PC-3 (cell line): ENCODE measurements at regions of chr11 and their contacts with region 1.

Region 1: GRCh38 chr11:128653801-128654231 is 40.1 kb upstream of the FLI1 start:
- DNase-seq: peak; percentile 90
- ATAC-seq: peak; percentile 99
- H3K4me3 ChIP-seq: no peak overlapping the region
- H3K27ac ChIP-seq: peak overlapping the region; percentile 79
- H3K4me1 ChIP-seq: peaks cover 17% of the 10 kb centered on the region
- H3K27me3 ChIP-seq: no peaks in the 10 kb centered on the region
- CTCF ChIP-seq: peak; percentile 42; the same call in 1 of the 2 replicates

Region 2: GRCh38 chr11:128692753-128693415 is 39.1 kb after region 1 on chr11:
- CTCF ChIA-PET with region 1: no interaction called
- POLR2A ChIA-PET with region 1: no interaction called
- intact Hi-C with region 1: loop called (anchors 1 kb)
- DNase-seq: peak; percentile 42
- ATAC-seq: peak; percentile 45
- H3K4me3 ChIP-seq: peak overlapping the region; percentile 79
- H3K27ac ChIP-seq: peak overlapping the region; percentile 55
- H3K4me1 ChIP-seq: 0 out of 2 replicates have a peak, but pooled peaks cover 4% of the 10 kb centered on the region
- H3K27me3 ChIP-seq: peaks cover 43% of the 10 kb centered on the region
- CTCF ChIP-seq: no peak

Region 3: GRCh38 chr11:128711136-128711535 is 57.3 kb after region 1 on chr11:
- CTCF ChIA-PET with region 1: no interaction called
- POLR2A ChIA-PET with region 1: no interaction called
- intact Hi-C with region 1: loop called (anchors 1 kb)
- DNase-seq: peak; percentile 88
- ATAC-seq: peak; percentile 46
- H3K4me3 ChIP-seq: no peak overlapping the region
- H3K27ac ChIP-seq: peak overlapping the region; percentile 80
- H3K4me1 ChIP-seq: peaks cover 53% of the 10 kb centered on the region
- H3K27me3 ChIP-seq: no peaks in the 10 kb centered on the region
- CTCF ChIP-seq: no peak

Region 4: DNA sequence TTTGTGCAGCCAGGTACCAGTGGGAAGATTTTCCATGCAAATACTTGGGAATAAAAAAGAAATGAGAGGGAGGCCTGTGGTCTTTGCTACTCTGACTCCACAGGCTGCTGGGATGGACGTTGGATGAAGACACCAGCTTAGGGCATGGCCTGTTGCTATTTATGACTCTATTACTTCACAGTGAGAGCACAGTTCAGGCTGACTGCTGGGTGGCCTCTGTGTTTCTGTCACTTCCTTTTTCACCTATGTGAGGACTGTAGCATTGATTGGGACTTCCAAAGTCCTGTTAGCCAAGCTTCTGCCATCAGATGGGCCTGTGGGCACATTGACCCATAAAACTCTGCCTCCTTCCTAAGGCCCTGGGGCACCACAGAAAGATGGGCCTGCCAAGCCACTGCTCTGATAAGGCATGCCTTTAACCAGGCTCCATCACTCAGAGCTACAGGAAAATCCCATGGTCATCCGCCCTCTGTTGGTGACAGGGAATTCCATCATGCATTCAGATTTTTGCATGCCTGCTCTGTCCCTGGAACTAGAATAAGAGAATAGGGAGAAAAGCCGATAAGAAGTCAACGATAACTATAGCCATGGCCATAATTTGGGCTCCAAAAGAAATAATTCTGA is 148.7 kb after region 1 on chr11:
- CTCF ChIA-PET with region 1: interaction called, 4 read pairs
- POLR2A ChIA-PET with region 1: no interaction called
- intact Hi-C with region 1: loop called (anchors 1 kb)
- DNase-seq: peak; percentile 72
- ATAC-seq: peak; percentile 92
- H3K4me3 ChIP-seq: no peak overlapping the region
- H3K27ac ChIP-seq: no peak overlapping the region
- H3K4me1 ChIP-seq: no peaks in the 10 kb centered on the region
- H3K27me3 ChIP-seq: no peaks in the 10 kb centered on the region
- CTCF ChIP-seq: peak; percentile 86